ENCODE measurements at regions of chr1 and their contacts with region 1.

Region 1: GRCh38 chr1:11979851-11980675 is at the start of gene MFN2:
- DNase-seq: peak; percentile 98
- H3K4me3 Mint-ChIP-seq: peak within 1 kb of the TSS; percentile 85
- H3K27ac Mint-ChIP-seq: peak within 1 kb of the TSS; percentile 85
- H3K4me1 Mint-ChIP-seq: peaks cover 29% of the 10 kb centered on the region
- H3K27me3 Mint-ChIP-seq: no peaks in the 10 kb centered on the region
- total RNA-seq, gene MFN2: 84.6 and 88.7 TPM in 2 replicates

Region 2: GRCh38 chr1:11272832-11273594 is 707.0 kb before region 1 on chr1 and contains the start of gene UBIAD1:
- intact Hi-C with region 1: no loop called
- DNase-seq: peak; percentile 93
- H3K4me3 Mint-ChIP-seq: peak within 1 kb of the TSS; percentile 91
- H3K27ac Mint-ChIP-seq: peak within 1 kb of the TSS; percentile 89
- H3K4me1 Mint-ChIP-seq: peaks cover 24% of the 10 kb centered on the region
- H3K27me3 Mint-ChIP-seq: peaks cover 2% of the 10 kb centered on the region
- total RNA-seq, gene UBIAD1: 32.4 and 32.5 TPM in 2 replicates

Region 3: GRCh38 chr1:11805447-11806306 is 174.4 kb before region 1 on chr1 and contains the starts of genes CLCN6 and MTHFR:
- intact Hi-C with region 1: loop called (anchors 1 kb)
- DNase-seq: peak; percentile 100
- H3K4me3 Mint-ChIP-seq: peak within 1 kb of the TSS; percentile 99
- H3K27ac Mint-ChIP-seq: peak within 1 kb of the TSS; percentile 95
- H3K4me1 Mint-ChIP-seq: peaks cover 53% of the 10 kb centered on the region
- H3K27me3 Mint-ChIP-seq: no peaks in the 10 kb centered on the region
- total RNA-seq, gene CLCN6: 12.7 and 15.2 TPM in 2 replicates
- total RNA-seq, gene MTHFR: 15.6 and 18.4 TPM in 2 replicates

Region 4: DNA sequence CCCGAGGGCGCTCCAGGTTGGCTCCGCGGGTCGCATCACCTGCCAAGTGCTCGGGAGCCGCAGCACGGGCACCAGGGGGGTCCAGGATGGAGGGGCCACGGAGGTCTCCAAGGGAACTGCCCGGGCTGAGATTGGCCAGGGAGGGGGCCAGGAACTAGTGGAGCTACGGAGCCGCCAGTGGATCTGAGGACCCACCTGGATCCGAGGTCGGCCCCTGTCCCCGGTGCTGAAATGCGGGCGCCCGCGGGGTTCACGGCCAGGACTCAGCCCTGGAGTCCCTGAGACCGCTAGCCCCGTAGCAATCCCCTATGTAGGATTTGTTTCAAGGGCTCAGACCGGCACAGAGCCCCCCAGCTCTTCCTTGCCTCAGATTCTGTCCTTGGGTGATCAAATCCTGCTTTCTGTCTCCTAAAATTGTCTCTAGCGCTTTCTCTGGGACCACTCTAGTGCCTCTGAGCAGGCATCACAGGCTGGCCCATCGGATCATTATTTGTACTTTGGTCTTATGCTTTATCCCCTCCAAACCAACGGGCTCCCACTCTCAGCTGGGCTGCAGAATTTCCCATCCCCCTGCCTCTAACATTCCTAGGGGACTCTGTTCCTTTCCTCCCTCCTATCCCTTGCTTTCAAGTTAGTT is 81.1 kb before region 1 on chr1:
- intact Hi-C with region 1: no loop called
- DNase-seq: peak; percentile 77
- H3K4me3 Mint-ChIP-seq: no peak overlapping the region
- H3K27ac Mint-ChIP-seq: no peak overlapping the region
- H3K4me1 Mint-ChIP-seq: no peaks in the 10 kb centered on the region
- H3K27me3 Mint-ChIP-seq: peaks cover 43% of the 10 kb centered on the region

Region 5: DNA sequence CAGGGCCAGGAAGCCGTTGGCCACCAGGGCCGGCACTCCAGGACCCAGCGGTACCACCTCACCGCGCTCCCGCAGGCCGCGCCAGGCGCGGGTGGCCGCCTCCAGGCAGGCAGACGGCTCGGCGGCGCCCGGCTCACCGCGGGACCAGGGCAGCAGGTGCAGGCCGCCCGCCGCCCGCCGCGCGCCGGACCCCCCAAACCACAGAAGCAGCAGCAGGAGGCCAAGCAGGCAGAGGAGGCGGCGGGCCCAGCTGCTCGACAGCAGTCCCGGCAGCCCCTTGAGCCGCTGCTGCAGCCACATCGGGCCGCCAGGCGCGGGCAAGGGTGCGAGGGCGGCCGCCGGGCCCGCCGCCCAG is 54.1 kb before region 1 on chr1:
- intact Hi-C with region 1: loop called (anchors 2 kb)
- DNase-seq: no peak
- H3K4me3 Mint-ChIP-seq: peak overlapping the region; percentile 85
- H3K27ac Mint-ChIP-seq: no peak overlapping the region
- H3K4me1 Mint-ChIP-seq: peaks cover 28% of the 10 kb centered on the region
- H3K27me3 Mint-ChIP-seq: no peaks in the 10 kb centered on the region

Region 6: GRCh38 chr1:11934302-11935056 is 45.6 kb before region 1 on chr1 and contains the start of gene PLOD1:
- intact Hi-C with region 1: loop called (anchors 1 kb)
- DNase-seq: peak; percentile 94
- H3K4me3 Mint-ChIP-seq: peak within 1 kb of the TSS; percentile 86
- H3K27ac Mint-ChIP-seq: peak within 1 kb of the TSS; percentile 50
- H3K4me1 Mint-ChIP-seq: peaks cover 8% of the 10 kb centered on the region
- H3K27me3 Mint-ChIP-seq: no peaks in the 10 kb centered on the region
- total RNA-seq, gene PLOD1: 40.3 and 40.6 TPM in 2 replicates

Region 7: DNA sequence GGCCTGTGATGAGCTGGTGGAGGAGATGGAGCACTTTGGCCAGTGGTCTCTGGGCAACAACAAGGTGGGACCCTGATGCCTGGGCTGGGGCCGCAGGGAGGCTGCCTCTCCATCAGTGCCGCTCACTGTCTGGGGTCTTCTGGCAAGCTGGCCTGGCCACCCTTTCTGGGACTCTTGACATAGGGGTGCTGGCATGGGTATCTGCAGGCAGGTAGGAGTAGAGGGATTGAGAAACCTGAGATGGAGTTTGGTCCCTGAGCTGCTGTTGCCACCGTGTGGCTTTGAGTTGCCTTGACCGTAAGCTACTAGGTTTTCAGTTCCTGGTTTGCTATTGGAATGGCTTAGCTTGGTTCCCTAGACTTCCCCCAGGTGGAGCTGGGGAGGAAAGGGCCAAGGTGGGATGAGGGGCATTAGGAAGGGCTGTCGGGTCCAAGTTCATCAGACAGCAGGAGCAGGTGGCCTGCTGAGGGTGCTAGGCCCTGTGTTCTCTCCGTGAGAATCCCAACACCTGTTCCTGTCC is 13.0 kb before region 1 on chr1:
- intact Hi-C with region 1: no loop called
- DNase-seq: peak; percentile 66
- H3K4me3 Mint-ChIP-seq: no peak overlapping the region
- H3K27ac Mint-ChIP-seq: no peak overlapping the region
- H3K4me1 Mint-ChIP-seq: peaks cover 8% of the 10 kb centered on the region
- H3K27me3 Mint-ChIP-seq: no peaks in the 10 kb centered on the region

Region 8: DNA sequence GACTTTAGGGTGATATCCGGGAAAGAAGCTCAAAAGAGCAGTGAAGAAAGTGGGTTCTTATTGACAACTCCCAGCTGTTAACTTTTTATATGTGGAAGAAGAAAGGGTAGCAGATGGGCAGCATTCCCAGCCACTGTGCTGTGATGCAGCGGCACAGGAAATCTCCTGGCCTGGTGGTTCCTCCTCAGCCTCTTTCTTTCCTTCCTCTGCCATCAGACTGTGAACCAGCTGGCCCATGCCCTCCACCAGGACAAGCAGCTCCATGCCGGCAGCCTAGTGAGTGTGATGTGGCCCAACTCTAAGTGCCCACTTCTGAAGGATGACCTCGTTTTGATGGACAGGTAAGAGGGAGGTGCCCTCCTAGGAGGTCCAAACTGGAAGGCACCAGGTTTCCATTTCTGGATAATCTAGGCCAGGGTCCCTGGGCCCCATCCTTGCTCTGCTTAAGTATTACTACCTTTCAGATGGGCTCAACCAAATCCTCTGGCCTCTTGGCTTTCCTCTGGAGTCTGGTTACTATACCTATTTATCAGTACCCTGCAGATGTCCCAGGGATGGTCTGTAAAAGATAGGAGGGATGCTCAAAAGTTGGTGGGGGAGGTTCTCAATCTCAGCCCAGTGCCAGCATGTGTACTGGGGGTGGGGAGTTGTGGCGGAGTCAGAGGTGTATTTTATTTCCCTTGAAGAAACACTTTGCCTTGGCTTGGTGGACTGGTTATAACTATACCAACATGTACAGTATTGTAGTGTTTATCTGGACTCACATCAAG is 17.2 kb after region 1 on chr1:
- intact Hi-C with region 1: no loop called
- DNase-seq: no peak
- H3K4me3 Mint-ChIP-seq: no peak overlapping the region
- H3K27ac Mint-ChIP-seq: no peak overlapping the region
- H3K4me1 Mint-ChIP-seq: peaks cover 4% of the 10 kb centered on the region
- H3K27me3 Mint-ChIP-seq: no peaks in the 10 kb centered on the region

Region 9: GRCh38 chr1:12019858-12020509 is 39.9 kb after region 1 on chr1:
- intact Hi-C with region 1: loop called (anchors 2 kb)
- DNase-seq: no peak
- H3K4me3 Mint-ChIP-seq: peak overlapping the region; percentile 91
- H3K27ac Mint-ChIP-seq: peak overlapping the region; percentile 72
- H3K4me1 Mint-ChIP-seq: peaks cover 16% of the 10 kb centered on the region
- H3K27me3 Mint-ChIP-seq: peaks cover 2% of the 10 kb centered on the region

Measured in activated CD4-positive, alpha-beta T cell treated with anti-CD3 and anti-CD28 coated beads, Interleukin-2, amount 10 ng/mL, durations not matched to agents 24 days and 14 days (primary cell).